ENCODE measurements at regions of chr10 and their contacts with region 1.

Region 1: DNA sequence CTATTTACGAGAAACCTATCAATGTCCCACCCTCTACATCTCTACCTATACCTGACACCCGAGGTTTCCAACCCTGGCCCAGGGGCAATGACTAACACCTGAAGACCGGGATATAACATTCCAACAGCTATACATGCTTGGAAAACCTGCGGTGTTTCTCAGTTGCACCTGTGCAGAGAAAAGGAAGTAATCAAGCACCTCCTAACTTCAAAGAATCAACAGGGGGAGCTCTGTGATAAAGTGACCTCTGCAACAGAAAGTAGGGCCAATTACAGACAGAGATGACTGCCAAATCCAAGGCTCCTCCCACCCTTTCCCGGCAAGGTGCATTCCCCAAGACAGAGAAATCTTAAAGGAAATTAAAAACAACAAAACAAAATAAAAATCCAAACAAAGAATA is 41.3 kb downstream of the CCDC6 start:
- DNase-seq: no peak
- H3K4me3 Mint-ChIP-seq: peak overlapping the region; percentile 20
- H3K27ac Mint-ChIP-seq: peak overlapping the region; percentile 56
- H3K4me1 Mint-ChIP-seq: peaks cover 61% of the 10 kb centered on the region
- H3K27me3 Mint-ChIP-seq: no peaks in the 10 kb centered on the region

Region 2: GRCh38 chr10:59585046-59585700 is 279.9 kb before region 1 on chr10:
- intact Hi-C with region 1: no loop called
- DNase-seq: no peak
- H3K4me3 Mint-ChIP-seq: no peak overlapping the region
- H3K27ac Mint-ChIP-seq: no peak overlapping the region
- H3K4me1 Mint-ChIP-seq: no peaks in the 10 kb centered on the region
- H3K27me3 Mint-ChIP-seq: no peaks in the 10 kb centered on the region

Region 3: GRCh38 chr10:59830601-59831259 is 34.4 kb before region 1 on chr10:
- intact Hi-C with region 1: loop called (anchors 2 kb)
- DNase-seq: no peak
- H3K4me3 Mint-ChIP-seq: no peak overlapping the region
- H3K27ac Mint-ChIP-seq: no peak overlapping the region
- H3K4me1 Mint-ChIP-seq: peaks cover 72% of the 10 kb centered on the region
- H3K27me3 Mint-ChIP-seq: no peaks in the 10 kb centered on the region

Region 4: GRCh38 chr10:59839588-59839987 is 25.5 kb before region 1 on chr10:
- intact Hi-C with region 1: loop called (anchors 1 kb)
- DNase-seq: no peak
- H3K4me3 Mint-ChIP-seq: no peak overlapping the region
- H3K27ac Mint-ChIP-seq: no peak overlapping the region
- H3K4me1 Mint-ChIP-seq: peaks cover 26% of the 10 kb centered on the region
- H3K27me3 Mint-ChIP-seq: no peaks in the 10 kb centered on the region

Region 5: GRCh38 chr10:59879361-59879913 is 14.3 kb after region 1 on chr10:
- intact Hi-C with region 1: loop called (anchors 1 kb)
- DNase-seq: no peak
- H3K4me3 Mint-ChIP-seq: peak overlapping the region; percentile 62
- H3K27ac Mint-ChIP-seq: peak overlapping the region; percentile 93
- H3K4me1 Mint-ChIP-seq: peaks cover 84% of the 10 kb centered on the region
- H3K27me3 Mint-ChIP-seq: no peaks in the 10 kb centered on the region

Region 6: DNA sequence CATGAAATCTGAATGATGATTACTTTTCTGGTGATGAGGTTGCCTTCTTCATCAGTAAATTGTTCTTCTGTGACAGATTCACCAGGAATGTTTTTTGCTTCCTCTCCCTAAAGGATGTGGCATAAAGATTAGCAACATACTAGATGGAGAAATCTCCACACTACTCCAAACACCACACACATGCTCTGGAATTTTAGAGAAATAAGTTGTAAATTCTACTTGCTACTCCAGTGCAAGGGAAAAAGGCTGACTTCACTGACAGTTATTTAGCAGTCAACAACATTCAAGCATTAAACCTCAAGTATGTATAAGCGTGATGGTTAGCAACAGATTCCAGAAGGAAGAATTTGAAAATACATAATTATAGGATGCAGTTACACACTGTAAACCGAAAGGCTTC is 179.1 kb after region 1 on chr10:
- intact Hi-C with region 1: no loop called
- DNase-seq: no peak
- H3K4me3 Mint-ChIP-seq: no peak overlapping the region
- H3K27ac Mint-ChIP-seq: no peak overlapping the region
- H3K4me1 Mint-ChIP-seq: no peaks in the 10 kb centered on the region
- H3K27me3 Mint-ChIP-seq: no peaks in the 10 kb centered on the region

Measured in activated T-helper 1 cell treated with anti-CD3 and anti-CD28 coated beads, Interleukin-12 subunit alpha, Interleukin-12 subunit beta, Interleukin-2, Interleukin-4 antibody, amounts not matched to agents 30 ng/mL and 10 ng/mL and 1 ng/mL, durations not matched to agents 14 hours and 24 hours and 36 hours (primary cell).